Left ventricle myocardium inferior (tissue), 1 donor: ENCODE measurements at regions of chr20 and their contacts with region 1.

Region 1: DNA sequence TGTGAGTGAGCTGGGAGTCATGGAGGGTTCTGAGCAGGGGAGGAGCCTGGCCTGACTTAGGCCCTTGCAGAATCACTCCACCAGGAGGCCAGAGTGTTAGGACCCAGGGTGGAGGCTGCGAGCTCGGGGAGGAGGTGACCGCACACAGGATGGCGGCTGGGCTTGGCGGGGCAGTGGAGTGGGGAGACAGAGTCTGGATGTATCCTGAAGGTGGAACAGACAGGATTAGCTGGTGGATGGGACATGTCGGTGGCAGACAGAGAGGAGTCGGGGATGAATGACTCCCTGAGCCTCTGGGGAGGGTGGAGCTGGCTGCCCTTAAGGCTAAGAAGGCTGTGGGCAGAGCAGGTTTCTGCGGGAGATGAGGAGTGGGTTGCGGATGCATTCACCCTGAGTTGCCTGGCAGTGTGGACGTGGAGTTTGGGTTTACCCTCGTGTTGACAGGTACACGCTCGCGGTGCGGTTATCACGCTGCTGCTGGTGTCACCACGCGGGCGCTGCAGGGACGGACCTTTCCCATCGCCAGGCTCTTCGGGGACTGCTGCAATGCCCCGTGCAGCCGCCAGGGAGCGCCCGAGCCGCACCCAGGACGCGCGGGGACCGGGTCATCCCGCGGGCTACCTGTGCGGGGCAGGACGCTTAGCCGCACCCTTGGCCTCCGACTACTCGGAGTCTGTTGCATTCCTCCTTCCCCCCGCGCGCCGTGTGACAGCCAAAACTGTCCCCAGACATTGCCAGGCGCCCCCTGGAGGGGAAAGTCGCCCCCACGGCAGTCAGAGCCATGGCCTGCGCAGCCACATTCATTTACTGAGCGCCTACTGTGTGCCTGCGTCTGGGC is 43.0 kb upstream of the PTGIS start:
- DNase-seq: peak; percentile 75
- H3K4me3 ChIP-seq: peak overlapping the region; percentile 43
- H3K27ac ChIP-seq: peak overlapping the region; percentile 81
- H3K4me1 ChIP-seq: peaks cover 34% of the 10 kb centered on the region
- H3K27me3 ChIP-seq: peaks cover 12% of the 10 kb centered on the region
- CTCF ChIP-seq: peak; percentile 100

Region 2: GRCh38 chr20:49541733-49542513 is 69.0 kb before region 1 on chr20:
- intact Hi-C with region 1: loop called (anchors 5 kb)
- DNase-seq: peak; percentile 48
- H3K4me3 ChIP-seq: no peak overlapping the region
- H3K27ac ChIP-seq: peak overlapping the region; percentile 1
- H3K4me1 ChIP-seq: no peaks in the 10 kb centered on the region
- H3K27me3 ChIP-seq: peaks cover 7% of the 10 kb centered on the region
- CTCF ChIP-seq: peak; percentile 80

Region 3: DNA sequence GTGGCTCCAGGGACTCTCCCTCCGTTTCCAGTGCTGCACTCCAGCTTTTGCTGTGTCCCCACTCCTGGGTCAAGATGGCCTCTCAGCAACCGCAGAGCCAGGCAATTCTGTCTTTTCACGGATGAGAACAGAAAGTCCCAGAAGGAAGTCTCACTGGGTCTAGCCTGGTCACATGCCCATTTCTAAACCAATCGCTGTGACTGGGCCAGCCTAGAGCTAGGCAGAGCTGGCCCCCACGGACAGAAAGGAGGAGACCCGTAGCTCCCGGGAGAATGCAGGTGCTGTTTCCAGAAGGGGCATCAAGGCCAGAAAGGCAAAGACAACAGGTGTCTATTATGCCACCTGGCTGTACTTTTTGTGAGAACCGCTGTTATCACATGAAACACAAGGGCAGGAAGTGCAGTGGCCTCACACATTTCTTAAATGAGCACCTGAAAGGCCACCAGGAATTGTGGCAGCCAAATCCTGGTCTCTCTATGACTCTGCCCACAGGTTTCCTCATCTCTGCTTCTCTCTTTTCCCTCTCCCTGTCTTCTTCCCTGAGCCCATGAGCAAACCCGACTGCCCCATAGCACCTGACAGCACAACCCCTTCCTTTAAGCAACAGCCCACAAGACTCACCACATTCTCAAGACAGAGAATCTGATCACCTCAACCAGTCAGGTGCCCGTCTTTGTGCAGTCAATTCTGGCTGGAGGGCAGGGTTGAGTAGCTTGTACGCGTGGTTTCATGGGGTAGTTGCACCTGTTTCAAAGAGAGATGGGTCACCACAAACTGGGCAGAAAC is 139.9 kb after region 1 on chr20:
- intact Hi-C with region 1: no loop called
- DNase-seq: no peak
- H3K4me3 ChIP-seq: no peak overlapping the region
- H3K27ac ChIP-seq: peak overlapping the region; percentile 28
- H3K4me1 ChIP-seq: peaks cover 27% of the 10 kb centered on the region
- H3K27me3 ChIP-seq: no peaks in the 10 kb centered on the region
- CTCF ChIP-seq: no peak

Region 4: GRCh38 chr20:49843770-49844380 is 233.0 kb after region 1 on chr20:
- intact Hi-C with region 1: loop called (anchors 5 kb)
- DNase-seq: no peak
- H3K4me3 ChIP-seq: no peak overlapping the region
- H3K27ac ChIP-seq: no peak overlapping the region
- H3K4me1 ChIP-seq: peaks cover 13% of the 10 kb centered on the region
- H3K27me3 ChIP-seq: no peaks in the 10 kb centered on the region
- CTCF ChIP-seq: no peak

Region 5: DNA sequence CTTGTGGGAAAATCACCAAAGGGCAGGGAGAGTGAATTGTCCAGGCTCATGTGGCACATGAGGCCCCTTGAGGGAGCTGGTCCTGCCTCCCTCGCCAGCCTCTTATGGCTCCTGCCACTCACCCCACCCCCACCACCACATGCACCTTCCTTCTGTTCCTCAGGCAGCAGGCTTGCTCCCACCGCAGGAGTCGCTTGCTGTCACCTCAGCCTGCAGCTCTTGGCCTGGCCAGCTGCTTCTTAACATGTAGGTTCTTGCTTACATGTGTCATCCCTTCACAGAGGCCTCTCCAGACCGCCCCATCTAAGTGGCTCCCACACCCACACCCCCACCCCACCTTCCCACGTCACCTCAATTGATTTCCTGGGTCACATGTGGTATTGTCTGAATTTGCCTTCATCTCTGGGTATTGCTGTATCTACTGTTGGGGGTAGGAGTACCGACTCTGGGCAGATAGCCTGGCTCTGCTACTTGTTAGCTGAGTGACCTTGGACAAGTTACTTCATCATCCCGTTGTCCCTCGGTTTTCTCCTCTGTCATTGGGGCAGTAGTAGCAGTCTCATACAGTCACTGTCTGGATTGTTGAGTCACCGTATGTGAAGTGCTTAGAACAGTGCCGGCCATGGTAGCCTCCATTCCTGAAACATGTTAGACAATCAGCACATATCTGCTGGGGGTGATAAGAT is 243.4 kb after region 1 on chr20:
- intact Hi-C with region 1: no loop called
- DNase-seq: no peak
- H3K4me3 ChIP-seq: no peak overlapping the region
- H3K27ac ChIP-seq: no peak overlapping the region
- H3K4me1 ChIP-seq: peaks cover 44% of the 10 kb centered on the region
- H3K27me3 ChIP-seq: no peaks in the 10 kb centered on the region
- CTCF ChIP-seq: no peak

Region 6: GRCh38 chr20:49928401-49929141 is 317.7 kb after region 1 on chr20:
- intact Hi-C with region 1: loop called (anchors 10 kb)
- DNase-seq: peak; percentile 72
- H3K4me3 ChIP-seq: no peak overlapping the region
- H3K27ac ChIP-seq: no peak overlapping the region
- H3K4me1 ChIP-seq: no peaks in the 10 kb centered on the region
- H3K27me3 ChIP-seq: no peaks in the 10 kb centered on the region
- CTCF ChIP-seq: peak; percentile 97